Caco-2 (cell line): ENCODE measurements at regions of chr3 and their contacts with region 1.

Region 1: DNA sequence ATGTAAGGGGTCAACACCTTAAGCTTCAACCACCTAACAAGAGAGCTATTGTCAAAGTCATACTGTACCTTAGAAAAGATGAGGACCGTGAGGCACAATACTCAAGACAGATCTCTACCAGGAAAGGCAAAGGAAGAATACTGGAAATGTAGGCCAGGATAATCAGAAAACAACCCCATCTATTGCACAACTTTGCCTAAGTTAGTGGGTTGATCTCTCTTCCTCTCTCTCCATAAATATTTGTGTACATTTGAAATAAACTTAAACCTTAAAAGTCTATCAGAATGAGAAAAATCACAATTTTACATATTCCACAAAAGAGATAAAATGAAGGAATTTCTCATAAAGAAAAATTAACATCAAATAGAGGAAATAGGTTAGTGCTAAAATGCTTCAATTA is 556.8 kb downstream of the MECOM start:
- DNase-seq: no peak
- H3K4me3 ChIP-seq: no peak overlapping the region
- H3K4me3 Mint-ChIP-seq: no peak overlapping the region
- H3K27ac Mint-ChIP-seq: no peak overlapping the region
- H3K4me1 ChIP-seq: no peaks in the 10 kb centered on the region
- H3K4me1 Mint-ChIP-seq: no peaks in the 10 kb centered on the region
- H3K27me3 ChIP-seq: no peaks in the 10 kb centered on the region
- H3K27me3 Mint-ChIP-seq: no peaks in the 10 kb centered on the region
- CTCF ChIP-seq: no peak

Region 2: DNA sequence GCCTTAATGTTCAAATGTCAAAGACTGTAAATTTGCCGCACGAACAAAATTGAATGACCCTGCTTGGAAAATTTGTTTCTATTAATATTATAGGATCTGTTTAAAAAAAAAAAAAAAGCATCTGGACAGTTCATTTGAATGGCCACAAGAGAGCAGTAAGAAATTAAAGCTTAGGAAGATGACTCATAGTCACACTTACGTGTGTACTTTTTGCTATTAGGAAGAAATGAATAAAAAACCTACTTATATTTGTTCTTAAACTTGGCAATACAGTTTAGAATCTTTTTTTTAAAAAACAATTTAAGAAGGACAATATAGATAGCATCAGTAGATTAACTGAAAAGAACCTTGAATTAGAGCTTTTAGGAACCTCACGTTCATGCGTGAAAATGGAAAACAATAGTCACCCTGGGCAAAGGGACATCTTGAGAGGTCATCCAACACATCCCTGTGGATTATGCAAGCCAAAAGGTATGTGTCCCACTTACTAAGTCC is 65.0 kb before region 1 on chr3:
- CTCF ChIA-PET with region 1: no interaction called
- POLR2A ChIA-PET with region 1: no interaction called
- intact Hi-C with region 1: loop called (anchors 2 kb)
- DNase-seq: no peak
- H3K4me3 ChIP-seq: no peak overlapping the region
- H3K4me3 Mint-ChIP-seq: no peak overlapping the region
- H3K27ac Mint-ChIP-seq: no peak overlapping the region
- H3K4me1 ChIP-seq: no peaks in the 10 kb centered on the region
- H3K4me1 Mint-ChIP-seq: no peaks in the 10 kb centered on the region
- H3K27me3 ChIP-seq: no peaks in the 10 kb centered on the region
- H3K27me3 Mint-ChIP-seq: no peaks in the 10 kb centered on the region
- CTCF ChIP-seq: peak; percentile 28 to 58

Region 3: DNA sequence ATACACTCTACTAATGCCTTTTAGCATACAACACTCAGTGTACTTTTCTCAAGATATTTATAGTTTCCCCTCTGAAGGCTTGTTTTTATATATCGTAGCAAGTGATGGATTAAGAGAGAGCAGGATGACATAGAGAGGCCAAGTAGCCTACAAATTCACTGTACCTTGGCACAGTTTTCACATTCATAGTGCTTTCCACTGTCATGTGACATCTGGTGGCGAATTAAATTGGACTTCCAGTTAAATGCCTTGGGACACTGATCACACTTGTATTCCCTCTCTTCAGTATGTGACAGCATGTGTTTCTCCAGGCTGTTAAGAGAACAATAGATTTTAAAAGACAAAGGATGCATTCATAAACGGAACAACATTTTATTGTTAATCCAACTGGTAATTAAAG is 15.7 kb after region 1 on chr3:
- CTCF ChIA-PET with region 1: no interaction called
- POLR2A ChIA-PET with region 1: no interaction called
- intact Hi-C with region 1: no loop called
- DNase-seq: no peak
- H3K4me3 ChIP-seq: no peak overlapping the region
- H3K4me3 Mint-ChIP-seq: no peak overlapping the region
- H3K27ac Mint-ChIP-seq: no peak overlapping the region
- H3K4me1 ChIP-seq: peaks cover 13% of the 10 kb centered on the region; the same call in 1 of the 2 replicates
- H3K4me1 Mint-ChIP-seq: peaks cover 12% of the 10 kb centered on the region
- H3K27me3 ChIP-seq: no peaks in the 10 kb centered on the region
- H3K27me3 Mint-ChIP-seq: no peaks in the 10 kb centered on the region
- CTCF ChIP-seq: no peak